Dorsolateral prefrontal cortex (tissue), 120 donors: ENCODE measurements at regions of chr4 and their contacts with region 1.

Region 1: DNA sequence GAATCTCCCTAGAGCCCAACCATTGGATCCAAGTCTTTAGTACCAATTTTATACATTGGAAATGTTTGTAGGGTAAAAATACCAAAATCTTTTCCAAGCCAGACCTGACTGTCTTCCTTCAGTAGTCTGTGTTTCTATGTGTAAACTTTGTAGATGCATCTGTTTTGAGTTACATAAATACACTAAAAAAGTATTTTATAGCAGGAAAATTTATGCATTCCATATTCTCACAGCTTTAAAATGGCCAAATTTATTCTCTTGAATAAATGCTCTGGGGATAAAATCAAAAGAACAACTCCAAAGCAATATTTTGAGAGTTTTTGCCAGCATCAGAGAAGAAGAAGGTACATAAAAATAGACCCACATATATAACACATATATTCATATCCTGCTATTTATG is 377.4 kb downstream of the PPP3CA start:
- DNase-seq: no peak
- H3K4me3 ChIP-seq: no peak overlapping the region
- H3K27ac ChIP-seq: peak overlapping the region in 23 of 59 donors; percentile 7 to 64 (median 39)
- H3K27me3 ChIP-seq: no peaks in the 10 kb centered on the region
- CTCF ChIP-seq: no peak

Region 2: GRCh38 chr4:100954046-100954445 is 15.9 kb before region 1 on chr4:
- intact Hi-C with region 1: loop called in 1 of 2 experiments (anchors 1 kb)
- DNase-seq: no peak
- H3K4me3 ChIP-seq: no peak overlapping the region
- H3K27ac ChIP-seq: peak overlapping the region in 47 of 59 donors; percentile 2 to 86 (median 65)
- H3K27me3 ChIP-seq: no peaks in the 10 kb centered on the region
- CTCF ChIP-seq: no peak